Astrocyte of the cerebellum (primary cell): ENCODE measurements at regions of chr19 and their contacts with region 1.

Region 1: DNA sequence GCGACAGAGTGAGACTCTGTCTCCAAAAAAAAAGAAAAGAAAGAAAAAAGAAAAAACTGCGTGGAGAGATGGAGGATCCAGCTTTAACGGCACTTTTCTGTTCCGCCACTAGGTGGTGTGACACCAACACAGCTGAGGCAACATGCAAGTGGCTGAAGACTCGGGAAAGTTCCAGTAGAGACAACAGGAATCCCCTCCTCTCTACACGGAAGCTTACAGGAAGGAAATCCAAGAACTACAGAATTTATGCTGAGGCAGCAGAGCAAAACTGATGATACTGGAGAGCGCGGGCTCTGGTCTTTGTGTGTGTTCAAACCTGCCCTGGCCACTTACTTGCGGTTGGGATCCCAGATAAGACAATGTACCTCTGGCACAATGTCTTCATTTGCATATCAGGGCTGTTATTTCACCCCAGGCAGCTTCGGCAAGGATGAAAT is 9.9 kb downstream of the RANBP3 start:
- DNase-seq: peak; percentile 74
- H3K4me3 ChIP-seq: no peak overlapping the region
- CTCF ChIP-seq: peak; percentile 95

Region 2: GRCh38 chr19:5934774-5935472 is 33.1 kb before region 1 on chr19:
- in situ Hi-C with region 1: loop called (anchors 5 kb)
- DNase-seq: no peak
- H3K4me3 ChIP-seq: no peak overlapping the region
- CTCF ChIP-seq: no peak

Region 3: DNA sequence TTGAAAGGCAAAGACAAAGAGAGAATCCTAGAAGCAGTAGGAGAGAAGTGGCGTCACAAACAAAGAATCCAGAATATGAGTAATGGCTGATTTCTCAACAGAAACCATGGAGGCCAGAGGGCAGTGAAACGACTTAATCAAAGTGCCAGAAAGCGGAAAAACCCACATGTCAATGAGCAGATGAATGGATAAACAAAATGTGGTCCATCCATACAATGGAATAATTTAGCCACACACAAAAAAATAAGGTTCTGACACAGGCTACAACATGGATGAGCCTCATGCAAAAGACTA is 62.1 kb after region 1 on chr19:
- in situ Hi-C with region 1: no loop called
- DNase-seq: peak; percentile 51
- H3K4me3 ChIP-seq: no peak overlapping the region
- CTCF ChIP-seq: no peak

Region 4: DNA sequence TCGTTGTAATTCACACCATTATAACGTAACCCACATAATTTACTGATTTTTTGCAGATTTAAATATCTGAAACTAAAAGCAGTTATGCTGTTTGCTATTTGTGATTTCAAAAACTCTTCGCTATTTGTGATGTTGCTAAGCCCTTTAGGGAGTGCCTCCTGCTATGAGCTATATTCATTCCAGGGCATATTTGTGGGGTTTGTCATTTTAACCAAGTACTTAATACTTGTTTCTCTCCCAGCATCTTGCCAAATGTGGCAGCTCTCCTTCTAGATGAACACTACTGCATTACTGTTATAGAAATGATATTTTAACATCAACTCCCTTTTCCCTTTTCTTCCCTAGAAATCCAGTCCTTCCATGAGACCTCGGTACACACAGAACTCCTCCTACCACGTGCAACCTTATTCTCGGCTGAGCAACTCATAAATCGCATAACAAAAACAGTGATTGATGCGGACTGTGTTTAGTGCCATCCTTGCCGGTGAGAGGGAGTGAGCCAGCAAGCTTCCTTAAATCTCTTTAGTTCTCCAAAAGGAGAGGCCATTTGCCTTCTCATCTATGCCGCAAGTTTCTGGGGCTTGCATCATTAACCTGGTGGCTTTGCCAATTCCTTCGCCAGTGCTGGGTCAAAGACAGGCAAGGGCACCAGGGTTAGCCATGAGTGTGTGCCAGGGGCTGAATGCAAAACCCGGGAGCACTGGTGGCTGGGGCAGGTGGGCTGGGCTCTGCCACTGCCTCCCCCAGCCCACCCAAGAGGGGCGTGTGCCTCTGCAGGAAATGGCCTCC is 108.9 kb after region 1 on chr19:
- in situ Hi-C with region 1: no loop called
- DNase-seq: peak; percentile 91
- H3K4me3 ChIP-seq: peak overlapping the region; percentile 13
- CTCF ChIP-seq: no peak